ENCODE measurements at regions of chr5 and their contacts with region 1.

Region 1: GRCh38 chr5:57298295-57298984 is 124.6 kb downstream of the GPBP1 start:
- DNase-seq: peak; percentile 54
- CTCF ChIP-seq: peak; percentile 75

Region 2: DNA sequence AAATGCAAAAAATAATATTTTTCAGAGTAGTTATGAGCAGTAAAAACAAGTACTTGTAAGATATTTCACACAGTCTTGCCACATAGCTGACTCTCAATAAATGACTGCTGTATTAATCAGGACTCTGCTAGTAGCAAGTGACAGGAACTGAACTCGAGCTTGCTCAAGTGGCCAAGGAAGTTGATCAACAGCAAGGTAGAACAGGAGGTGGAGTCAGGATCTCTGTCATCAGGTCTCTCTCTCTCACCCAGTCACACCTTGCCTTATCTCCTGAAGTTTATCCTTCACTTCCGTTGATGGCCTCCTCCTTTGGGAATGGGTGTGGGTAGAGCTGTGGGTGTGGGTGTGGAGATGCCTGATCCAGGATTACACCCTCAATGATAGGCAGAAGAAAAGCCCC is 17.6 kb before region 1 on chr5:
- CTCF ChIA-PET with region 1: interaction called, 11 read pairs
- POLR2A ChIA-PET with region 1: no interaction called
- DNase-seq: no peak
- CTCF ChIP-seq: no peak

Region 3: DNA sequence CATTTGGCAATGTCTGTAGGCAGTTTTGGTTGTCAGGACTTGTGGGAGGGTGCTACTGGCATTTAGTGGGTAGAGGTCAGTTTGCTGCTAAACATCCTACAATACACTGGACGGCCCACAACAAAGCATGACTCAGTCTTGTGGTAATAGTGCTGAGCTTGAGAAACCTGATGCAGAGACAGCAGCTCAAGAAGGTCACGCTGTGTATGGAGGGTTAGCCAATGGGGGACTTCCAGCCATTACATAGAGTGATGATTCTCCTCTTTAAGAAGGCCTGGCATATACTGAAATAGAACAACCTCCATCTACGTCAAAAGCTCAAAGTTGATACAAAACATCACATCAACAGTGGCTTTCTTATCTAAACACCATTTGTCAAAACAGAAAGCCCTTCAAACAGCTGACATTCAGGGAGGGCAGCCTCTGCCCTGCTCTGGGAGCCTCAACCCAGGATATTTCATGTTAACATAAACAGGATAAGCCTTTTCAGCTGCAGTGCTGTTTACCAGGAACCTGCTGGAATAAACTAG is 18.4 kb after region 1 on chr5:
- CTCF ChIA-PET with region 1: interaction called, 17 read pairs
- POLR2A ChIA-PET with region 1: no interaction called
- DNase-seq: peak; percentile 14
- CTCF ChIP-seq: no peak

Region 4: GRCh38 chr5:57360871-57361270 is 62.4 kb after region 1 on chr5:
- CTCF ChIA-PET with region 1: no interaction called
- POLR2A ChIA-PET with region 1: no interaction called
- DNase-seq: no peak
- CTCF ChIP-seq: no peak